ENCODE measurements at regions of chr19 and their contacts with region 1.

Region 1: DNA sequence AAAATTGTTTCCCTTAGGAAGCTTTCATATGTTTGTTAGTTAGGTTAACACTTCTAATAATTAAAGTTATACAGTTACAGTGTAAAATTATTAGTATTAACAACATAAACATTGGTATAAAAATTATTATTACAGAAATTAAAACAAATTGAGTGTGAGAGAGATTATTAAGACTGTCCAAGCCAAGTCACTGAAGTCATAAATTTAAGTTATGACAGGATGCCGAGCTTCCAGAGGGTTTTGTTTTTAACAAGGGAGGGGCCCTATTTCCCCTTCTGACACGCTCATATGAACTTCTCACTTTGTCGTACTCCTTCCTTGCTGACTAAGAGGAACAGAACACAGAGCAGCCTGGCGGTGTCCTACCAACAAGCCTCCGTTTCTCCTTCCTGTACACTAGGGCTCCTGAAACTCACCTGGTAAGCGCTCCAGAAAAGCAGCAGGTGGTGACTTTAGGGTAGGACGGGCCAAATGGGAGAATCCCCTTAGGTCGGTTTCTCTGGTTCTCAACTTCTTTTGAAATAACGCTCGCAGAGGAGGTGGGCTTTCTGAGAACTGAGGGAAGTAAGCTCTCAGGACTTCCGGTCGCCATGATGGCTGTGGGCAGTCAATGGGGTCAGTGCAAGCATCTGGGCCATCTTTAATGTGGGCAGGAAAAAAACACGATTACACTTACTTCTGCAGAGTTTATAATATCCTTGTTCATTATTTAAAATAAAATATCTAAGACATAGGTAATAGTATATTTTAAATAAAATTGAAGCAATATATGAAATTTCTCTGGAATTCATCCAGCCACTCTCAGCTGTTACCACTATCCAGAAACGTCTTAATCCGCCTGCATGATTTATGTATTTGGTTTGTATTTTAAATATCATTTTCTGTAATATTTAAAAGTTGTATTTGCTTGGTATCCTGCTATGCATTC is at the start of gene CARD8:
- DNase-seq: peak; percentile 61 to 94 (median 73)
- ATAC-seq: peak; percentile 88
- H3K4me3 ChIP-seq: peak within 1 kb of the TSS; percentile 67
- H3K4me3 Mint-ChIP-seq: peak within 1 kb of the TSS; percentile 93
- H3K27ac ChIP-seq: peak within 1 kb of the TSS; percentile 89 to 90
- H3K27ac Mint-ChIP-seq: peak within 1 kb of the TSS; percentile 97
- H3K4me1 ChIP-seq: peaks cover 66% of the 10 kb centered on the region
- H3K4me1 Mint-ChIP-seq: peaks cover 81% of the 10 kb centered on the region
- H3K27me3 ChIP-seq: no peaks in the 10 kb centered on the region
- H3K27me3 Mint-ChIP-seq: no peaks in the 10 kb centered on the region
- CTCF ChIP-seq: no peak
- total RNA-seq, gene CARD8: 71.1 to 73.1 TPM

Region 2: GRCh38 chr19:48152551-48152950 is 103.1 kb before region 1 on chr19:
- CTCF ChIA-PET with region 1: interaction called, 5 read pairs
- POLR2A ChIA-PET with region 1: no interaction called
- intact Hi-C with region 1: loop called in 1 of 2 experiments (anchors 5 kb)
- DNase-seq: peak; percentile 32 to 78 (median 62)
- ATAC-seq: peak; percentile 75
- H3K4me3 ChIP-seq: no peak overlapping the region
- H3K4me3 Mint-ChIP-seq: no peak overlapping the region
- H3K27ac ChIP-seq: no peak overlapping the region
- H3K27ac Mint-ChIP-seq: no peak overlapping the region
- H3K4me1 ChIP-seq: no peaks in the 10 kb centered on the region
- H3K4me1 Mint-ChIP-seq: peaks cover 5% of the 10 kb centered on the region
- H3K27me3 ChIP-seq: no peaks in the 10 kb centered on the region
- H3K27me3 Mint-ChIP-seq: no peaks in the 10 kb centered on the region
- CTCF ChIP-seq: peak; percentile 95

Region 3: DNA sequence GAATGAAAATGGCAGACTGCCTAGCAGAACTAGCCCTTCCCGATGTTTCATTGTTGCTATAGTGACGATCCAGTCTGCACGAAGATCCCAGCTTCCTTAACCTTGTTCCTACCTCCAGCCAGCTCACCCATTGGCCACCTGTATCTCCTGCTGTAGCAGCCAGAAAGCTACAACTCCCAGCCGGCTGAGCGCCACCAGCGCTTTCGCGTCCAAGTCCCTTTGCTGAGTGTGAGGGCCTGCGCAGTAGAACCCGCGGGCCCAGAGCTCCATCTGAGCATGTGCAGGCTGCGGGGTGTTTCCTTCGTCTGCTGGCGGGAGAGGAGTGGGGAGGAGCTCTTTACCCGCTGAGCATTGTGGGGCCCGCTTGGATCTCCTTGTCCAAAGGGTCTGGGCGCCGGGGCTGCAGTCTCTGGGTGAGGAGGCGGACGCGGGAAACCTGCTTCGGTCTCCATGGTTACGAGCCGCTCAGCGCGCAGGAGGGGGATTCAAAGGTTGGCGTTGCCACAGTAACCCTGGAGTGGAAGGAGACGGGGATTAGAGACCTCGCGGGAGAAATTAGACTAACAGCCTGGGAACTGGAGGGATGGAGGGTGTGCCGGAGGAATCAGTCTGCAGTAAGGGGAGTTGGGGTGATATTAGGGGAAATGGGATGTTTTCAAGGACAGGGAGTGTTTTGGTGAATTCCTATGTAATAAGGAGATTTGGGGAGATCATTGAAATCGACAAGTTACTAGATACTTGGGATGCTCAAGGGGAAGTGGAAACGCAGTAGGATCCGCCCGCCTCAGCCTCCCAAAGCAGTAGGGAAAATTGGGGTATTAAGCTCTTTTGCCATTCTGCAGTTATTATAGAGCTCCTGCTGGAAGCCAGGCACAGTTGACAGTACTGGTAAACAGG is 51.7 kb before region 1 on chr19:
- CTCF ChIA-PET with region 1: interaction called, 29 read pairs
- POLR2A ChIA-PET with region 1: interaction called, 37 read pairs
- intact Hi-C with region 1: loop called (anchors 1 to 2 kb)
- DNase-seq: peak; percentile 84 to 95 (median 88)
- ATAC-seq: peak; percentile 100
- H3K4me3 ChIP-seq: peak overlapping the region; percentile 78
- H3K4me3 Mint-ChIP-seq: no peak overlapping the region
- H3K27ac ChIP-seq: peak overlapping the region; percentile 49 to 64
- H3K27ac Mint-ChIP-seq: no peak overlapping the region
- H3K4me1 ChIP-seq: peaks cover 33% of the 10 kb centered on the region
- H3K4me1 Mint-ChIP-seq: peaks cover 22% of the 10 kb centered on the region
- H3K27me3 ChIP-seq: no peaks in the 10 kb centered on the region
- H3K27me3 Mint-ChIP-seq: no peaks in the 10 kb centered on the region
- CTCF ChIP-seq: no peak

Region 4: GRCh38 chr19:48230555-48231129 is 25.0 kb before region 1 on chr19:
- CTCF ChIA-PET with region 1: interaction called, 14 read pairs
- POLR2A ChIA-PET with region 1: interaction called, 4 read pairs
- intact Hi-C with region 1: loop called in 1 of 2 experiments (anchors 5 kb)
- DNase-seq: peak in 4 of 14 experiments; percentile 11 to 50 (median 28)
- ATAC-seq: no peak
- H3K4me3 ChIP-seq: no peak overlapping the region
- H3K4me3 Mint-ChIP-seq: no peak overlapping the region
- H3K27ac ChIP-seq: no peak overlapping the region
- H3K27ac Mint-ChIP-seq: no peak overlapping the region
- H3K4me1 ChIP-seq: peaks cover 3% of the 10 kb centered on the region
- H3K4me1 Mint-ChIP-seq: no peaks in the 10 kb centered on the region
- H3K27me3 ChIP-seq: no peaks in the 10 kb centered on the region
- H3K27me3 Mint-ChIP-seq: no peaks in the 10 kb centered on the region
- CTCF ChIP-seq: no peak

Region 5: DNA sequence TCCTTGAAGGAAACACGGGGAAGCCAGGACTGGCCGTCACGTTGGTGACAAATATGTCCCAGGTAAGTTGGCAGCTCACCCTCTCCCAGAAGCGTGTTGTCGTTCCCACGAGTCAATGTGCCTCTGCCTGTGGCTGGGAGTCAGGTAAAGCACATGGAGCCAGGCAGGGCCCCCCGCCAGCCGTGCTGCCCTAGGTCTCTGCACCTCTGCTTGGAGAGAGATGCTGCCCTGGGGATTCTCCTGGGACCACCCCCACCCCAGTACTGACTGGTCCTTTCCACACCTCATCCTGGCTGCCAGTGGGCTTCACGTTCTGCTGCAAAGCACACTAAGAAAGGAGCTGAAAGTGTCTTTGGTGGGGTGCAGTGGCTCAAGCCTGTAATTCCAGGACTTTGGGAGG is 24.1 kb after region 1 on chr19:
- CTCF ChIA-PET with region 1: no interaction called
- POLR2A ChIA-PET with region 1: no interaction called
- intact Hi-C with region 1: no loop called
- DNase-seq: no peak
- ATAC-seq: no peak
- H3K4me3 ChIP-seq: no peak overlapping the region
- H3K4me3 Mint-ChIP-seq: no peak overlapping the region
- H3K27ac ChIP-seq: no peak overlapping the region
- H3K27ac Mint-ChIP-seq: no peak overlapping the region
- H3K4me1 ChIP-seq: no peaks in the 10 kb centered on the region
- H3K4me1 Mint-ChIP-seq: no peaks in the 10 kb centered on the region
- H3K27me3 ChIP-seq: no peaks in the 10 kb centered on the region
- H3K27me3 Mint-ChIP-seq: no peaks in the 10 kb centered on the region
- CTCF ChIP-seq: no peak

Region 6: DNA sequence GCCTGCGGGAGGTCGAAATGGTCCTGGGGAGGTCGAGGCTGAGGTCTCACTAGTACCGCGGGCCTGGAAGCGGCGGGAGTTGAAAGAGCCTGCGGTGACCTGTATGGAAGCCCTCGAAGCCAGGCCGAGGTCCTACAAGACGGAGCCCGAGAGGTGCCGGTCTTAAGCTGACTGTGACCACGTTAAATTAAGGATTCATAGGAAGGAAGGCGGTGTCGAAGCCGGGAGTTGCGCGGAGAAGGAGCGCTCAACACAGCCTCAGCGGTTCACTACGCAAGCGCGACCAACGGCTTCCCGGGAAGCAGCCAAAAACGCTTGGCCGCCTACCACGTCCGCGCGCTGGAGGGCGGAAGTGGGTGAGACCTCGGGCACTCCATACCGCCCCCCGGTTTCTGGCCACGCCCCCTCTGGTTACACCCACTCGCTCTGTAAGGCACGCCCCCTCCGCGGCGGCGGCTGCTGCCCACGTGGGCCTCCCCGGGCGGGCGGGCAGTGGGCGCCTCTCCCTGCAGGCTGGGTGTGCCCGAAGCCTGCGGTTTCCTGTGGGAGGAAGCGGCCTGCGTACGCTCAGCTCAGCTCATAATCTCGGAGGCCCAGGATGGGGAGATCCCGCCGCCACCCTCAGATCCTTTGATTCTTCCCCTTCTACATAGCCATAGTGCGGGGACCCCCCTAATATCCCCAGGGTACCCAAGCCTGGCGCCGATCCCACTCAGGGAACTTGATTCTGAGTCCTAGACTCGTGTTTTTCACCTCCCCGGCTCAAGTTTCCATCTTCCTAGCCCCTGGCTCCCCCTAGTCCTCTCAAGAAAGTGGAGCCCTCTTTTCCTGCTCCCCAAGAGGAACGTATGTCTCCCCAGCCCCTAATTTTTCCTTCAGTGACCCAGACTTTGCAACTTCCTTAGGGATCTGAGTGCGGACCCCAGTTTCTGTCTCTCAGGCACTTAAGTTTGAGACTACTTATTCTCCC is 66.3 kb after region 1 on chr19:
- CTCF ChIA-PET with region 1: no interaction called
- POLR2A ChIA-PET with region 1: interaction called, 10 read pairs
- intact Hi-C with region 1: no loop called
- DNase-seq: peak; percentile 98 to 100 (median 100)
- ATAC-seq: peak; percentile 61
- H3K4me3 ChIP-seq: peak overlapping the region; percentile 76
- H3K4me3 Mint-ChIP-seq: peak overlapping the region; percentile 93
- H3K27ac ChIP-seq: peak overlapping the region; percentile 99 to 100
- H3K27ac Mint-ChIP-seq: peak overlapping the region; percentile 99
- H3K4me1 ChIP-seq: peaks cover 62% of the 10 kb centered on the region
- H3K4me1 Mint-ChIP-seq: peaks cover 68% of the 10 kb centered on the region
- H3K27me3 ChIP-seq: no peaks in the 10 kb centered on the region
- H3K27me3 Mint-ChIP-seq: no peaks in the 10 kb centered on the region
- CTCF ChIP-seq: no peak

Region 7: GRCh38 chr19:48363810-48364563 is 108.3 kb after region 1 on chr19 and contains the starts of genes SYNGR4 and TMEM143:
- CTCF ChIA-PET with region 1: interaction called, 5 read pairs
- POLR2A ChIA-PET with region 1: interaction called, 10 read pairs
- intact Hi-C with region 1: no loop called
- DNase-seq: peak; percentile 96 to 100 (median 98)
- ATAC-seq: peak; percentile 86
- H3K4me3 ChIP-seq: peak within 1 kb of the TSS; percentile 94
- H3K4me3 Mint-ChIP-seq: peak within 1 kb of the TSS; percentile 90
- H3K27ac ChIP-seq: peak within 1 kb of the TSS; percentile 77 to 87
- H3K27ac Mint-ChIP-seq: peak within 1 kb of the TSS; percentile 90
- H3K4me1 ChIP-seq: peaks cover 22% of the 10 kb centered on the region
- H3K4me1 Mint-ChIP-seq: peaks cover 17% of the 10 kb centered on the region
- H3K27me3 ChIP-seq: no peaks in the 10 kb centered on the region
- H3K27me3 Mint-ChIP-seq: no peaks in the 10 kb centered on the region
- CTCF ChIP-seq: no peak
- total RNA-seq, gene SYNGR4: not detected
- total RNA-seq, gene TMEM143: 9.4 to 11.0 TPM

Region 8: DNA sequence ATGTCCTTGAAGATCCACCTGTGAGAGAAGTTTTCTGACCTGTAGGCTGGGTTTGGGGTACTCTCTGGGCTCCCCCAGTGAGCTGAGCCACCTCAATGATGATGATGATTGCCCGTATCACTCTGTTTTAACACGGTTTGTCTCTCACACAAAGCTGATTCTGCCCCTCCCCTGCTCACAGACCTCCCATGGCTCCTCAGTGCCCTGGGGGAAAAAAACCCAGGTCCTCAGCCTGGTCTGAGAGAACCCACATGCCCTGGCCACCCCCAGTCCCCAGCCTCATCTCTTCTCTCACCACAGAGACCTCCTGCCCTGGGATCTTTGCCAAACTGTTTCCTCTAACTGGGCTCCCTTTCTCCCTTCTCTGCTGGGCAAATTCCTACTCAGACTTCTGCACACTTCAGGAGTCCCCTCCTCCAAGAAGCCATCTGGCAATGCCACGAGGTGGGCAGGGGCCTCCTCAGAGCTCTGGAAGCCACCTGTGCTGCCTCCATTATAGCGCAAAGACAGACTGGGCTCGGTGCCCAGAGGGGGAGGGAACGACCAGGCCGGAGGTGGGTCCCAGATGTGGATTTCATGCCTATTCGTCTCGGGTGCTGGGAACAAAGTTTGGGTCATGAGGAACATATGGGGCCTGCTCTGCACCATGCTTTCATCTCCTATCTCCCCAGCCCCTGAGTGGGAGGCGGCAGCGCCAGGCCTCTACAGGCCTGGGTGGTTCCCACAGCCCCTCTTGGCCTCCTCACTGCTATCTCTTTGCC is 398.8 kb after region 1 on chr19:
- CTCF ChIA-PET with region 1: no interaction called
- POLR2A ChIA-PET with region 1: no interaction called
- intact Hi-C with region 1: no loop called
- DNase-seq: no peak
- ATAC-seq: no peak
- H3K4me3 ChIP-seq: no peak overlapping the region
- H3K4me3 Mint-ChIP-seq: no peak overlapping the region
- H3K27ac ChIP-seq: no peak overlapping the region
- H3K27ac Mint-ChIP-seq: no peak overlapping the region
- H3K4me1 ChIP-seq: peaks cover 3% of the 10 kb centered on the region
- H3K4me1 Mint-ChIP-seq: peaks cover 9% of the 10 kb centered on the region
- H3K27me3 ChIP-seq: no peaks in the 10 kb centered on the region
- H3K27me3 Mint-ChIP-seq: no peaks in the 10 kb centered on the region
- CTCF ChIP-seq: no peak

Region 9: GRCh38 chr19:49665351-49666119 is 1409.9 kb after region 1 on chr19 and contains the starts of genes BCL2L12 and IRF3:
- CTCF ChIA-PET with region 1: no interaction called
- POLR2A ChIA-PET with region 1: no interaction called
- intact Hi-C with region 1: loop called in 1 of 2 experiments (anchors 10 kb)
- DNase-seq: peak; percentile 99 to 100 (median 99)
- ATAC-seq: peak; percentile 78
- H3K4me3 ChIP-seq: peak within 1 kb of the TSS; percentile 62
- H3K4me3 Mint-ChIP-seq: peak within 1 kb of the TSS; percentile 95
- H3K27ac ChIP-seq: peak within 1 kb of the TSS; percentile 57 to 90
- H3K27ac Mint-ChIP-seq: peak within 1 kb of the TSS; percentile 88
- H3K4me1 ChIP-seq: peaks cover 44% of the 10 kb centered on the region
- H3K4me1 Mint-ChIP-seq: peaks cover 18% of the 10 kb centered on the region
- H3K27me3 ChIP-seq: no peaks in the 10 kb centered on the region
- H3K27me3 Mint-ChIP-seq: no peaks in the 10 kb centered on the region
- CTCF ChIP-seq: no peak
- total RNA-seq, gene BCL2L12: 9.9 to 11.3 TPM
- total RNA-seq, gene IRF3: 109 to 119 TPM

Measured in CD4-positive, alpha-beta T cell (primary cell).